ENCODE measurements at regions of chr3 and their contacts with region 1.

Region 1: DNA sequence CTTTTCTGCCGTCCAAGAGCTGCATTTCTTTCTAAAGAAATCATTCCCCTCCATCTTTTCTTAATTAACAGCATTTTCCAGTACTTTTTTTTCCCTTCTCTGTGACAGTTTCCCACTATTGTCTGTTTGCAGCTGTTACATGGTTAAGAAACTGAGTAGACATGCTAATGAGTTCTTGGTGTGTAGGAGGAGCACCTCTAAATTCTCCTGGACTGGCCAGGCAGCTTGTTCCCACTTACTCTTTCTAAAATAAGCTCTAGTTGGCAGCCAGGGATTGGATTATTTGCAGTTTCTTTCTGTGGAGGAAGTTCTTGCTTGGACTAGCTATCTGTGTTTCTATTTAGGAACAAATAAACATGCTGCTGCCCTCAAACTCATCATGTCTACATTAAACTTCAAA is 235.1 kb upstream of the GAP43 start:
- DNase-seq: peak in 2 of 10 donors; percentile 28 to 31
- H3K4me3 ChIP-seq: no peak overlapping the region
- H3K27ac ChIP-seq: peak overlapping the region in 5 of 59 donors; percentile 22 to 44 (median 39)
- H3K27me3 ChIP-seq: no peaks in the 10 kb centered on the region
- CTCF ChIP-seq: no peak

Region 2: DNA sequence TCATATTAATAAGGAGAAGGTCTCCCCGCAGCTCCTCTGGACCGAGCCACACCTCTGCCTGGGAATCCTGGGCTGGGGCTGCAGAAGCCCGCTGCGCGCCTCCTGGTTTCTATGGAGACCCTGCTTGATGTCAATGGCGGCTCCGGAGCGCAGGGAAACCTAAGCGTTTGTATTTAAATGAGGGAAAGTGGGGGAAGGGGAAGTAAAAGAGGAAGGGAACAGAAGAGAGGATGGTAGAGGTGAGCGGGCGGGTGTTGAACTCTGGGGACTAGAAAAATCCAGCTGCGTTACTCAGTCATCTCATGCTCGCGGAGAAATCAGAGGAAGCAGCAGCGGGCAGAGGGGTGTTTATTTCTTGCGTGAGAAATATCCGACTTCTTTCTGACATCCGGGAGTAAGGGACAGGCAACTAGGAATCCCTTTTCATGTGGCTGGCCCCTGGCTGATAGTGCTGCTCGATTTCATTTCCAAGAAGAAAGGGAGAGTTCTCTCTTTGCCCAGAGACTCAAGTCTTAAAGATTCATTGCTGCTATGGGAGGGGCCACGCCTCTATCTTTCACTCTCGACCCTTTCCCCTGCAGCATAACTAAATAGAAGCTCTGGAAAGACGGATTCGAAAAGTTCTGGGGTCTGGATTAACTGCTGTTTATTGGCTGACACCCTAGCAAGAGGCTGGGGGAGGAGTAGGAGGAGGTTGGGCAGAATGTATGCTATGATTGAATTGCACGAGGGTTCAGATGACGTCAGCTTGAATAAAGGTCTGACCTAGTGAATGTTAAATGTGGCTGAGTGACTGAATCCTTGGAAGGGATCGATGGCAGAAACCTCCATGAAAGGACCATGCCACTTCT is 124.6 kb after region 1 on chr3:
- intact Hi-C with region 1: loop called in 1 of 2 experiments (anchors 10 kb)
- DNase-seq: peak in 8 of 10 donors; percentile 49 to 70 (median 58)
- H3K4me3 ChIP-seq: peak overlapping the region; percentile 23 to 74 (median 58)
- H3K27ac ChIP-seq: peak overlapping the region in 57 of 59 donors; percentile 1 to 89 (median 74)
- H3K27me3 ChIP-seq: no peaks in the 10 kb centered on the region
- CTCF ChIP-seq: no peak

Region 3: DNA sequence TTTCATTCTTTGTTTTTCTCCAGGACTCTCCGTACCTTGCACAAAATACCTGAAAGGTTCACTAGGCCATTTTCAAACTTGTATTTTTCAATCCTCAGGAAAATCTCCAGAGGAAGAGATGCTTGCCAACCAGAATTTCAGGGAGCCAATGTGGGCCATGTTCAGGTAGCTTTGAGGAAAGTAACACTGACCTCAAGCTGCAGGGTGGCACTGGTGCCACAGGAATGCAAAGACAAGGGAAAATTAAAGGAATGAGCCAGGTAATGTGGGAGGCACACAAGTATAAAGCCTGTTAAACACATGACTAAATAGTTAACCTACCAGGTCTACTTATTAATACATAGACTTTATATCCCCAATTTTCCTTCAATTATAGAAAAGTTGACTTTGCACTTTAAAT is 183.2 kb after region 1 on chr3:
- intact Hi-C with region 1: no loop called
- DNase-seq: peak in 1 of 10 donors; percentile 13
- H3K4me3 ChIP-seq: no peak overlapping the region
- H3K27ac ChIP-seq: no peak overlapping the region
- H3K27me3 ChIP-seq: no peaks in the 10 kb centered on the region
- CTCF ChIP-seq: no peak